Heart right ventricle (tissue), 16 donors: ENCODE measurements at regions of chr9 and their contacts with region 1.

Region 1: GRCh38 chr9:123769719-123770118 is 160.2 kb downstream of the DENND1A start:
- DNase-seq: no peak
- ATAC-seq: no peak
- H3K4me3 ChIP-seq: no peak overlapping the region
- H3K27ac ChIP-seq: no peak overlapping the region
- H3K4me1 ChIP-seq: peaks cover 0 to 25% (median 0%) of the 10 kb centered on the region in 9 donors
- H3K27me3 ChIP-seq: no peaks in the 10 kb centered on the region
- CTCF ChIP-seq: no peak

Region 2: DNA sequence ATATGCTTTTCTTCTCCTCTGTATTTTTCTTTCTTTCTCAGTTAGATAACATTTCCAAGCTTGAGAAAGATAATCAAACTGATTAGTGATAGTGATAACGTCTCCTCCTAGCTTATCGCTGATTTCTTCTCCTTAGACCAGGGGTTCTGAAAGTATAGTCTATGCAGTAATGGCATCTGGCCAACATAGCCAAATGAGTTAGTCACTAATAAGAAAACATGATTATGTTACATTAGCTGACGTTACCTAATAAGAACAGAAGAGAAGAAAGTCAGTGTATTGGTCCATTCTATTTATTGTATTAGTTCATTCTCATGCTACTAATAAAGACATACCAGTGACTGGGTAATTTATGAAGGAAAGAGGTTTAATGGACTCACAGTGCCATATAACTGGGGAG is 612.5 kb before region 1 on chr9:
- intact Hi-C with region 1: no loop called
- DNase-seq: no peak
- ATAC-seq: no peak
- H3K4me3 ChIP-seq: no peak overlapping the region
- H3K27ac ChIP-seq: no peak overlapping the region
- H3K4me1 ChIP-seq: no peaks in the 10 kb centered on the region
- H3K27me3 ChIP-seq: no peaks in the 10 kb centered on the region
- CTCF ChIP-seq: no peak

Region 3: GRCh38 chr9:123523001-123523400 is 246.7 kb before region 1 on chr9:
- intact Hi-C with region 1: no loop called
- DNase-seq: no peak
- ATAC-seq: no peak
- H3K4me3 ChIP-seq: no peak overlapping the region
- H3K27ac ChIP-seq: no peak overlapping the region
- H3K4me1 ChIP-seq: no peaks in the 10 kb centered on the region
- H3K27me3 ChIP-seq: no peaks in the 10 kb centered on the region
- CTCF ChIP-seq: no peak

Region 4: DNA sequence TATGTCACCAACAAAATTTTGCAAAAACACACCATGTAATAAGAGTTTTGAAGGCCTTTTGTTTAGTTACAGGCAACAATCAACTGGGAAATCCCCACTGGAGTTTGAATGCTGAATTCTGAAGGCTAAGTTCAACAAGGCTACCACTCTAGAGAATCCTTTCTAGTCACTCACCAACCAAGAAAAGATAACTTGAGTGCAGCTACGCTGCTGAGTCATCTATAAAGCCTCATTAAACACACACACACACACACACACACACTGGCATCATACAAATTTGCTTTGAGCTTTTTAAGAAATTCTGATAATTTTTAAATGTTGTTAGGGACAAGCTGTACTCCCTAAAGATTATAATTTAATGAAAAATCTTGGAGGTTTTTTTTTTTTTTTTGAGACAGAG is 59.4 kb before region 1 on chr9:
- intact Hi-C with region 1: loop called in 2 of 10 experiments (anchors 10 kb)
- DNase-seq: no peak
- ATAC-seq: no peak
- H3K4me3 ChIP-seq: no peak overlapping the region
- H3K27ac ChIP-seq: no peak overlapping the region
- H3K4me1 ChIP-seq: peaks cover 0 to 4% (median 0%) of the 10 kb centered on the region in 9 donors
- H3K27me3 ChIP-seq: no peaks in the 10 kb centered on the region
- CTCF ChIP-seq: no peak

Region 5: GRCh38 chr9:123825342-123826060 is 55.8 kb after region 1 on chr9:
- intact Hi-C with region 1: no loop called
- DNase-seq: no peak
- ATAC-seq: no peak
- H3K4me3 ChIP-seq: no peak overlapping the region
- H3K27ac ChIP-seq: no peak overlapping the region
- H3K4me1 ChIP-seq: peaks cover 0 to 7% (median 0%) of the 10 kb centered on the region in 9 donors
- H3K27me3 ChIP-seq: no peaks in the 10 kb centered on the region
- CTCF ChIP-seq: peak in 1 of 9 donors; percentile 8